Posterior vena cava (tissue), 2 donors: ENCODE measurements at regions of chr4 and their contacts with region 1.

Region 1: GRCh38 chr4:40289366-40290188 is 45.6 kb upstream of the CHRNA9 start:
- DNase-seq: no peak

Region 2: DNA sequence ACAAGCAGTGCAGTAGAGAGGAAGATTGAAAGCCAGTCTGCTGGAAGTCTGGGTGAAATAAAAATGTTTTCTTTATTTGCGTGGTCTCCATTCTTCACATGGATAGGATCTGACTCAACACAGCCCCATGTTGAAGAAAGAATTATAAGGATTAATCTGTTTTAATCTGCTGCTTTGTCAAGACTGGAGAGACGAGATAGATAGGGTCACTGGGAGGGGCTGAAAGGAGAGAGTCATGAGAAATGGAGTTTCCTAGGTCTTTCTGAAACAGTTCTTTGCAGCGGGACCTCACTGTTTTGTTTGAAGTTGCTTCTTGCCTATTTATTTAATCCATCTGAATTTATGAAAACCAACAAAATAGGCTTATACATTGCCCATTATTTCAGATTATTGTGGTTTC is 125.1 kb before region 1 on chr4:
- intact Hi-C with region 1: loop called in 1 of 2 experiments (anchors 10 kb)
- DNase-seq: no peak

Region 3: DNA sequence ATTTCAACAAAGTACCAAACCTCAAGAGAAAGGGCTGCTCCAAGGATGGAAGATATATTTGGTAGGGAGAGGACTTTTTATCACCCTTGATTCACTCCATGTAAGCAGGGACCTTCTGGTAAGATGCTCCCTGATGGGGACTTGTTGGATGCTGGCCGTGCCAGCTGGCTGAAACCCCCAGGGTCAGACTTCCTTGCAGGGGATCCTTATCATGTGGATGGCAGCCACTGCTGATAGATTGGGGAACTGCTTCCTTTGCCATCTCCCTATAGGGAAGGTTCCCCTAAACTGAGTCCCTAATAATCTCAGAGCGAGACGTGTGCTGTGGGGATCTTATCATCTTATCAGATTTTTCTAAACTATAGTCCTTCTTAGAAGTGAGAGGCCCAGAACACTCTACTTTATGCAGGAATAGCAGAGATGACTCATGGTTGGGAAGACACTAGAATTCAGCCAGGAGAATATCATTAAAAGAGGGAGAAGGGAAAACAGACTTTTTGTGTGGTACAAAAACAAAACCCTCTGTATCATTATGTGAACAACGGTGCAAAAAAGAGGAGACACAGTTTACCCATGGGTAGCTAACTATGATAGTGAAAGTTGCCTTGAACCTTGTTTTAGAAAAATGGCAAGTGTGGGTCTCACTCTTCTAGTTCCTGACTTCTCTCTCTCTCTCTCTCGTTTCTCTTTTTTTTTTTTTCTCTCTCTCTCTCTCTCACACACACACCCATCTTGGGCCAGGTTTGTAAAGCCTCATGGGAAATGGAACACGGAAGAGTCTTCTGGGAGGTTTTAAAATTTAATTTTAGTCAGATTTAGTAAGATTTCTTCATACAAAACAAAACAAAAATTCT is 76.7 kb before region 1 on chr4:
- intact Hi-C with region 1: no loop called
- DNase-seq: no peak